Mammary epithelial cell (primary cell): ENCODE measurements at regions of chr9 and their contacts with region 1.

Region 1: GRCh38 chr9:101727612-101728524 is 10.6 kb downstream of the GRIN3A start:
- DNase-seq: no peak
- H3K4me3 ChIP-seq: no peak overlapping the region
- H3K27ac ChIP-seq: no peak overlapping the region
- H3K4me1 ChIP-seq: no peaks in the 10 kb centered on the region
- H3K27me3 ChIP-seq: no peaks in the 10 kb centered on the region
- CTCF ChIP-seq: peak; percentile 65 to 70

Region 2: DNA sequence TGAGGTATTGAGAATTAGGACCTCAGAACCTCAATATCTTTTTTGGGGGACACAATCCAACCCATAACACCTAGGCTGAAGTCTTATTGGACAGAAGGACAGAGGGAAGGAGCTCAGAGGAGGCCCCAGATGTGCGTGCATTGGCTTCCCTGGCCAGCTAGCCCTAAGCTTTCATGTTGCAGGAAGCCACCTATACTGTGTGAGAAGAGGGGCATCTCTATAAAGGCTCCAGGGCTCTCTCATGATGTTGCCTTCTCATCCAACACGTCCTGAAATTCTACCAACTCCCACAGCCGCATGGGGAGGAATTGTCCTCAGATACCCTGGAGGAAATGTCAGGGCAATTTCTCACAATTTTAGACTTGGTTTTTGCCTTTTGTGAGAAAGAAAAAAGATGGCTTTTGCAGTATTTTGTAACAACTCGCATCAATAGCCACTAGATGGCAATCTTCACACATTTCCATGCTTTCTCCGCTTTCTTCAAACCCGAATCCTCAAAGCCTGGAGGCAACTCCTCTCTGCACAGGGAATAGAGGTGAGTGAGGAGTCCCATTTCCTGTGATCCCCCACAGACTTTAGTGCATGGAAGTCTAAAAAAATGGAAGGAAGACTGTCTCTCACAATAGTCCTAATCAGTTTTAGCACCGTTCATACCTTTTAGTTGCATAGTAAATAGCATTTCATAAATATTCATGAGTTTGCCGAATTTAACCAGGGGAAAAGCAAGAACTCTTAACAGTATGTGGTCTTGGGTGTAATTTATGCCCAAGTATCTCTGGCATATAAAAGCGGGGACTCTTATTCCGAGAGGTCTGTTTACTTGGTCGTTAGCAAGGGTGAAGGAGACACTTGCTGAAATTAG is 125.7 kb before region 1 on chr9:
- CTCF ChIA-PET with region 1: no interaction called
- dilution Hi-C with region 1: no loop called
- in situ Hi-C with region 1: no loop called
- intact Hi-C with region 1: loop called (anchors 1 kb)
- DNase-seq: peak; percentile 36
- H3K4me3 ChIP-seq: no peak overlapping the region
- H3K27ac ChIP-seq: no peak overlapping the region
- H3K4me1 ChIP-seq: no peaks in the 10 kb centered on the region
- H3K27me3 ChIP-seq: no peaks in the 10 kb centered on the region
- CTCF ChIP-seq: peak; percentile 53 to 64

Region 3: DNA sequence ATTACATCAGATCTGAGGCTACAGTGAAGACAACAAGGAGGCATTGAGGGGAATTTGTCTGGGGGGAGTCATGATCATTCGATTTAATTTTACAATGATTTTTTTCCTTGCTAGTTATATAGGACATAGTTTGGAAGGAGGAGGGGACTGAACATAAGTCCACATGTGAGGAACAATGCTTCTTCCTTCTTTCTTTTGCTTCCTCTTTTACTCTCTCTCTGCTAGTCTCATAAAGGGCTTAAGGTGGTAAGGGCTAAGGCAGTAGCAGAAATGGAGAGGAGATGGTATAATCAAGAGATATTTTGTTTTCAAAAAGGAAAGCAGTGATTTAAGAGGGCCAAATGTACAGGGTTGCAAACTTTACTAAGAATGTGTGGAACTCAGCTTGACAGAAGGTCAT is 53.7 kb before region 1 on chr9:
- CTCF ChIA-PET with region 1: no interaction called
- dilution Hi-C with region 1: no loop called
- in situ Hi-C with region 1: no loop called
- intact Hi-C with region 1: no loop called
- DNase-seq: no peak
- H3K4me3 ChIP-seq: no peak overlapping the region
- H3K27ac ChIP-seq: no peak overlapping the region
- H3K4me1 ChIP-seq: no peaks in the 10 kb centered on the region
- H3K27me3 ChIP-seq: no peaks in the 10 kb centered on the region
- CTCF ChIP-seq: no peak

Region 4: DNA sequence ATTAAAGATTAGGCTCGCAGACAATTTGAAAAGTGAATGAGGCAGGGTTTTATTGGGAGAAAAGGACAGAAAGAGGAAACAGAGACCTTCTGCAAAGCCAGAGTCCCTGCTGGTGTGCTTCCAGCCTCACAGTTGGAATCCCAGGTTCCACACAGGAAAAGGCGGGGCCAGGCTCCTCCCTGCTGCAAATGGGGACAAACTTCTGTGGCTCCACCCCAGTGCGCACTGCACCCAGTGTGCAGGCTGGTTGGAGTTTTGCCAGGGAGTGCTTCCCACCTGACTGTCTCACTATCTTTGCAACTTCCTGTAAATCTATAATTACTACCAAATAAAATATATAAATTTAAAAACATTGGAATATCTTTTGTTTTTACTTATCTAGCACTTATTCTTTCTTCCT is 396.6 kb after region 1 on chr9:
- CTCF ChIA-PET with region 1: no interaction called
- dilution Hi-C with region 1: no loop called
- in situ Hi-C with region 1: no loop called
- intact Hi-C with region 1: no loop called
- DNase-seq: no peak
- H3K4me3 ChIP-seq: no peak overlapping the region
- H3K27ac ChIP-seq: no peak overlapping the region
- H3K4me1 ChIP-seq: no peaks in the 10 kb centered on the region
- H3K27me3 ChIP-seq: no peaks in the 10 kb centered on the region
- CTCF ChIP-seq: no peak